Right lobe of liver (tissue), 6 donors: ENCODE measurements at regions of chr20 and their contacts with region 1.

Region 1: DNA sequence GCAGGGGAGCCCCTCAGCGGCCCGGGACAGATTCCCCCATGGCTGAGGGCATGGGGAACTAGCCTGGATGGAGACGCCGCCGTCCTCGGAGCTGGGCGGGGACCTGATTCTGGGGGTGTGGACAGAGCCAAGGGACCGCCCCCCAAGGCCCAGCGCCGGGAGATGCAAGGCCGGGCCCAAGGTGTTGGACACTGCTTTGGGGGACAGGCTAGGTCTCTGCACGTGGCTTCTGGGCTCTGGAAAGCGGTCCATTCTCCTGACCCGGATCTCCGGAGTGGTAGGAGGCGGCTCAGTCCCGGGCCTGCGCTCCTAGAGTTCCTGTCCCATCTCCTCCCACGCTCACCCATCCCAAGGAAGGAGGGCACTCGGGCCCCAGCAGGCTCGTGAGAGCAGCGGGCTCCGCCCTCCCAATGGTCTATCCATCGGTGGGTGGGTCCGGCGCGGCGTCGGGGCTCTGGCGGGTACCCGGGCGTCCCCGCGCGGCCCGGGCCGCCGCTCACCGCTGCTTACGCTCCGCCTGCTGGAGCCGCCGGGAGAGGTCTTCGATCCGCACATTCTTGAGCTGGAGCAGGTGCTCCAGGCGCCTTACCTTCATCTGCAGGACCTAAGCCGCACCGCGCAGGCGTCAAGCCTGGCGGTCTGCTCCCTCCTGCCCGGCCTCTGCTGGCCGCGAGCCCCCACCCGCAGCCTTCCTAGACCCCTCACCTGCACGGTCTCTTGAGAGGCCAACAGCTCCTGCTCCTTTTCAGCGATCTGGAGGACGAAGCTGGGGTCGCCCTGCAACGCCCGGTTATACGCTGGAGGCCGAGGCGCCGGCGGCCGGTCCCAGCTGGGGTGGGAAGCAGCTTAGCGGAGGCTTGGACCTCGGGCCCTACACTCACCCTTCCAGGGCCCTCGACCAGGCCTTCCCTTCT is 3.3 kb downstream of the SPEF1 start:
- DNase-seq: peak in 2 of 3 donors; percentile 72 to 74
- ATAC-seq: peak; percentile 52 to 60 (median 54)
- H3K4me3 ChIP-seq: peak overlapping the region; percentile 43 to 54 (median 46)
- H3K27ac ChIP-seq: no peak overlapping the region
- H3K4me1 ChIP-seq: peaks cover 0 to 21% (median 8%) of the 10 kb centered on the region in 4 donors
- H3K27me3 ChIP-seq: no peaks in the 10 kb centered on the region
- CTCF ChIP-seq: no peak
- POLR2A ChIP-seq: no peak

Region 2: DNA sequence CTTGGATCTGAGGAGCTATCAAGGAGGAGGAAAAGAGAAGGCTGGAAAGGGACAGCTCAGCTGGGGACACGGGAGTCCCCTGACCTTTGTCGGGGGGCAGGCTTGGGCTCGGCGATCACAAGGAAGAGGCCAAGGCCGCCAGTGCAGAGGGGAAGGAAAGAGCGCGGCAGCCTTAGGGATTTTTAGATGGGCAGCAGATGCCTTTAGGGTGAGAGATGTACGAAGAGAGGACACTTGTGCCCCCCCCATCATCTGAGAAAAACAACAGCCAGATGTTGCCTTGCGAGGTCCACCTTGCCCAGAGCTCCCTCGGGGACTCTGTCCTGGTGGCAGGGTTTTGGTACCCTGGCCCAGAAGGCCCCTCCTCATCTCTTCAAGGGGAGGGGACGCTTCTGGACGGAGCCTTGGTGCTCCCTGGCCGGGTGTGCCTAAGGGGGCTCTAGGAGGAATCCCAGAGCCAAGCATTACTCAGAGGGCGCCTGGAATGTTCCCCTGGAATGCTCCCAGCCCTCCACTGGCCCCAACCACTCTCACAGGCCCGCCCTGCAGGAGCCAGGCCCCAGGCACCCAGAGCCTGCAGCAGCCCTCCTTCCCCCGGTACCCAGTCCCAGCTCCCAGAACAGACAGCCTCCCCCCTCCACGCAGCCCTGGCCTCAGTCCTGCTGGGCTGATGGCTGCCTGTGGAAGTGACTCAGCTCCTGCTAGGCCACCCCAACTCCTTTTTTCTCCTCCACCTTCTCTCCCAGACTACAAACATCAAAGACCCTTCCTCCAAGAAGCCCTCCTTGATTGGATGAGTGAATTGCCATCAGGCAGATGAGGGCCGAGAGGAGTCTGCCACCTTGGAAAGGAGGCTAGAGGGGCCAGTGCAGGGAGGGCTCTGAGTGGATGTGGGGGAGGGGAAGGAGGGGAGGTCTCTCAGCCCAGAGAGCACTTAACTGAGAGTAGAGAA is 97.9 kb before region 1 on chr20:
- intact Hi-C with region 1: loop called in 1 of 2 experiments (anchors 10 kb)
- DNase-seq: no peak
- ATAC-seq: no peak
- H3K4me3 ChIP-seq: no peak overlapping the region
- H3K27ac ChIP-seq: no peak overlapping the region
- H3K4me1 ChIP-seq: peaks cover 0 to 6% (median 0%) of the 10 kb centered on the region in 4 donors
- H3K27me3 ChIP-seq: peaks cover 0 to 4% of the 10 kb centered on the region in 2 donors
- CTCF ChIP-seq: no peak
- POLR2A ChIP-seq: no peak

Region 3: DNA sequence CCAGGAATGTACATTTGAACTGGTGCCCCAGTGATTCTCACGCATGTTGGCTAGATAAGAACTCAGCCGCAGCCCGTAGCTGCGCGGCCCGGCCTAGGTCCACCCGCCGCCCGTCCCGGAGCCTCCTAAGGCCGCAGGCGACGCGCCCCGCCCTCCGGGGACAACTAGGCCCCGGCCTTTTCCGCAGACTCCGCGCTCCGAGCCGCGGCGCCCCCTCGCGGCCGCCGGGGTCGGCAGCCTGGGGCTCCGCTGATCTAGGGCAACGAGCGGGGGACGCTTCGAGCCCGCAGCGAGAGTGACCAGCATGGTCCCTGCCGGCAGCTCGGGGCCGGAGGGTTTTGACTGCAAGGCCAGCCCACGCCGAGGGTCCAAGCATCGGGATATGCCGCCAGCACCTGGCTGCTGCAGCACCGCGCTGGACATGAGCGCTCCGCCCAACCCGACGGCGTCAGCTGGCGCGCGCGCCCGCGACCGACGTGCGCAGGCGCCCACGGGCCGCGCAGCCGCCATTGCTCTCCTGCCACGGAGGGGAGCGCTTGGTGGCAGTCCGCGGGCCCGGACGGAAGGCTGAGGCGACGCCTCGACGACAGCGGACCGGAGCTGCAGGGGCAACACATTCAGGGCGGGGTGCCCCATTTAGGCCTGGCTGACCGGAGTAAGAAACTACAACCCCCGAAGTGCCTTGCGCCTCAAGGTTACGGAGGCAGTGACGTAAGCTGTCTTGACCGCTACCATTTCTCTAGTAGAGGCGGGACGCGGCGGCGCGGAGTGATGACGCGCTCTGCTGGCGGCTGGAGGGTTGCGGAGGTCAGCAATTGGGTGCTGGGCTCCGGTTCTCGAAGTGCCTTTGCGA is 42.3 kb after region 1 on chr20 and contains the start of gene AP5S1:
- intact Hi-C with region 1: no loop called
- DNase-seq: peak; percentile 98
- ATAC-seq: peak; percentile 80 to 91 (median 86)
- H3K4me3 ChIP-seq: peak within 1 kb of the TSS; percentile 63 to 81 (median 64)
- H3K27ac ChIP-seq: peak within 1 kb of the TSS; percentile 97 to 100 (median 99)
- H3K4me1 ChIP-seq: peaks cover 0 to 9% (median 7%) of the 10 kb centered on the region in 4 donors
- H3K27me3 ChIP-seq: no peaks in the 10 kb centered on the region
- CTCF ChIP-seq: peak; percentile 99 to 100 (median 100)
- POLR2A ChIP-seq: peak; percentile 68
- total RNA-seq, gene AP5S1: 7.7 to 16.1 (median 9.5) TPM

Region 4: GRCh38 chr20:3888622-3889488 is 110.9 kb after region 1 on chr20 and contains the start of gene PANK2:
- intact Hi-C with region 1: no loop called
- DNase-seq: peak; percentile 99 to 100 (median 100)
- ATAC-seq: peak; percentile 96 to 99 (median 96)
- H3K4me3 ChIP-seq: peak within 1 kb of the TSS; percentile 75 to 93 (median 91)
- H3K27ac ChIP-seq: peak within 1 kb of the TSS; percentile 77 to 96 (median 85)
- H3K4me1 ChIP-seq: peaks cover 0 to 40% (median 11%) of the 10 kb centered on the region in 4 donors
- H3K27me3 ChIP-seq: no peaks in the 10 kb centered on the region
- CTCF ChIP-seq: peak in 3 of 4 donors; percentile 27 to 50 (median 35)
- POLR2A ChIP-seq: peak; percentile 90
- total RNA-seq, gene PANK2: 13.0 to 17.8 (median 13.8) TPM